Lower lobe of right lung (tissue), 2 donors: ENCODE measurements at regions of chr19 and their contacts with region 1.

Region 1: GRCh38 chr19:2070436-2070827 is 19.4 kb upstream of the MKNK2 start:
- DNase-seq: no peak
- ATAC-seq: no peak
- H3K4me3 ChIP-seq: no peak overlapping the region
- H3K27ac ChIP-seq: no peak overlapping the region
- H3K4me1 ChIP-seq: peaks cover 20% of the 10 kb centered on the region
- H3K27me3 ChIP-seq: no peaks in the 10 kb centered on the region
- CTCF ChIP-seq: no peak

Region 2: DNA sequence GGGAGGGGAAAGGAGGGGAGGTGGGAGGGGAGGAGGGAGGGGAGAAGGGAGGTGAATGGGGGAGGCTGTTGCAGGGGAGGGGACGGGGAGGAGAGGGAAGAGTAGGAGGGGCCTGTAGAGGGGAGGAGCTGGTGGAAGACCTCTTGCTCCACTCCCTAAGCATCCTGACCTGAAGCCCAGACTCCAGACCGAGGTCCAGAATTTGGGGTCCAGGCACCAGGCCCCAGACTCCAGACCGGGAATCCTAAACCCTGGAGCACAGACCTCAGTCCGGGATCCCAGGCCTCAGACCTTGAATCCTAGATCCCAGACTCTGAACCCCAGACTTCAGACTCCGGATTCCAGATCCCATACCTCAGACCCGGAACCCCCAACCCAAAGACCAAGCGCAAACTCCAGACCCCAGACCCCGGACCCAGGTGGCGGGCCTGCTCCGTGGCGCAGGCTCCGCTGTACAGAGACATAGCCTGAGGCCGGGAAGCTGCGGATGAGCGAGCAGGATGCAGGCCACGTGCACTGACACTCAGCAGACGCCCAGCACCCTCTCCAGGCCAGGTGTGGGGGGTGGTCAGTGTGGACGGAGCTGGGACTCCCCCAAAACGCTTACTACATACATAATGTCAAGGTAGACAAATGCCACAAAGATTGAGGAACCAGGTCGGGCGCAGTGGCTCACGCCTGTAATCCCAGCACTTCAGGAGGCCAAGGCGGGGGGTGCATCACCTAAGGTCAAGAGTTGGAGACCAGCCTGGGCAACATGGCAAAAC is 54.2 kb before region 1 on chr19:
- intact Hi-C with region 1: loop called (anchors 10 kb)
- DNase-seq: peak; percentile 77
- ATAC-seq: peak; percentile 82 to 88
- H3K4me3 ChIP-seq: peak overlapping the region; percentile 31
- H3K27ac ChIP-seq: peak overlapping the region; percentile 18
- H3K4me1 ChIP-seq: peaks cover 12% of the 10 kb centered on the region
- H3K27me3 ChIP-seq: no peaks in the 10 kb centered on the region
- CTCF ChIP-seq: no peak

Region 3: GRCh38 chr19:2246801-2247361 is 176.4 kb after region 1 on chr19:
- intact Hi-C with region 1: no loop called
- DNase-seq: no peak
- ATAC-seq: peak in 1 of 2 donors; percentile 1
- H3K4me3 ChIP-seq: no peak overlapping the region
- H3K27ac ChIP-seq: no peak overlapping the region
- H3K4me1 ChIP-seq: peaks cover 41% of the 10 kb centered on the region
- H3K27me3 ChIP-seq: peaks cover 26% of the 10 kb centered on the region
- CTCF ChIP-seq: no peak